ENCODE measurements at regions of chr7 and their contacts with region 1.

Region 1: GRCh38 chr7:121081327-121081936 is 92.9 kb downstream of the CPED1 start:
- DNase-seq: no peak
- H3K4me3 ChIP-seq: no peak overlapping the region
- H3K27ac ChIP-seq: peak overlapping the region; percentile 80
- H3K4me1 ChIP-seq: peaks cover 58% of the 10 kb centered on the region
- H3K27me3 ChIP-seq: no peaks in the 10 kb centered on the region
- CTCF ChIP-seq: peak; percentile 82

Region 2: DNA sequence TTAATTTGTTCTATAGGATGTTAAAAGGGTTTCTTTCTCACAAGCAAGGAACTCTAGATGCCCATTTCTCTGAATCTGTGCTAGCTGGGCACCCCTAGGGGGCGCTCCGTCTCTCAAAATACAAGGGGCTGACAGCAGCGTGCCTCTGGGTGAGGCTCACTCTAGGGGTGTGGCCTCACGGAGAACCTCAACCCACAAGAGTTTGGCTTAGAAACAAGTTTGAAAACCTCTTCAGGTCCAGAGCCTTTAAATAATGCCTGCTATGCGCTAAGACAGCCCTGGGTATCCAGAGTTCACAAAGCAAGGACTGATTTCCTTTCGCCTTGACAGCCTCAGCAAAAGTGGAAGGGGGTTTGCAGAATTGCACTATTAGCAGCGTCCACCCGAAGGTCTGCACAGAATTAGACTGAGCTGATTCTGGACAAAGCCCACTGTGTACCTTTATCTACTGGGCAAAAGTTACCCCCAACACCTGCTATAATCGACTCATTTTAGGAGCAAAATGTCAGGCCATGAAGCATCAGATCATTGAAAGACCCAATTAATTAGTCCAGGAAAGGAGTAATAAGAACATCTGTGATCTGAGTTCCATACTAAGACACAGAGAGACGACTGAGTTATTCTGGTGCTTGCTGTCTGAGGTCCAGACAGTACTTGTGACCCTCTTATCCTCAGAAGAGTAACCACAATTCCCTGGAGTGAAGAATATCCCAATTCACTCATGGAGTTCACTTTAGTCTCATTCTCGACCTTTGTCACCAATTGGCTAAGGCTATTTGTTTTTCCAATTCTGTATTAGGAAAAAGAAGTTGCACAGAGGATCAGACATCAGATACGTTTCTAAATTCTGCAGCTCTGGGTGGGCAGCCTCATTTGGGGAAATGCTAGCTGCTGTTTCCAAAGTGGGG is 93.5 kb before region 1 on chr7:
- intact Hi-C with region 1: loop called (anchors 2 kb)
- DNase-seq: peak; percentile 91
- H3K4me3 ChIP-seq: peak overlapping the region; percentile 74
- H3K27ac ChIP-seq: peak overlapping the region; percentile 94
- H3K4me1 ChIP-seq: peaks cover 52% of the 10 kb centered on the region
- H3K27me3 ChIP-seq: no peaks in the 10 kb centered on the region
- CTCF ChIP-seq: peak; percentile 96

Measured in left ventricle myocardium inferior (tissue), 1 donor.